ENCODE measurements at regions of chr19 and their contacts with region 1.

Region 1: GRCh38 chr19:8355631-8356402 is 8.1 kb upstream of the ANGPTL4 start:
- DNase-seq: no peak
- H3K4me3 ChIP-seq: no peak overlapping the region
- H3K4me3 Mint-ChIP-seq: peak overlapping the region in 1 of 8 donors; percentile 1
- H3K27ac ChIP-seq: no peak overlapping the region
- H3K27ac Mint-ChIP-seq: no peak overlapping the region
- H3K4me1 ChIP-seq: no peaks in the 10 kb centered on the region
- H3K4me1 Mint-ChIP-seq: peaks cover 0 to 5% (median 2%) of the 10 kb centered on the region in 4 donors
- H3K27me3 ChIP-seq: no peaks in the 10 kb centered on the region
- H3K27me3 Mint-ChIP-seq: peaks cover 6 to 11% of the 10 kb centered on the region in 2 donors

Region 2: GRCh38 chr19:8321060-8321985 is 34.5 kb before region 1 on chr19 and contains the starts of genes NDUFA7 and RPS28:
- CTCF ChIA-PET with region 1: interaction called, 10 read pairs
- POLR2A ChIA-PET with region 1: no interaction called
- intact Hi-C with region 1: no loop called
- DNase-seq: peak; percentile 96 to 97 (median 97)
- H3K4me3 ChIP-seq: peak within 1 kb of the TSS; percentile 88 to 96
- H3K4me3 Mint-ChIP-seq: peak within 1 kb of the TSS; percentile 94 to 99 (median 97)
- H3K27ac ChIP-seq: peak within 1 kb of the TSS; percentile 97
- H3K27ac Mint-ChIP-seq: peak within 1 kb of the TSS; percentile 97 to 99 (median 99)
- H3K4me1 ChIP-seq: peaks cover 42% of the 10 kb centered on the region
- H3K4me1 Mint-ChIP-seq: peaks cover 9 to 44% (median 33%) of the 10 kb centered on the region in 4 donors
- H3K27me3 ChIP-seq: no peaks in the 10 kb centered on the region
- H3K27me3 Mint-ChIP-seq: no peaks in the 10 kb centered on the region
- total RNA-seq, gene NDUFA7: 30.4 to 31.0 TPM
- total RNA-seq, gene RPS28: 2,963 to 3,045 TPM

Region 3: DNA sequence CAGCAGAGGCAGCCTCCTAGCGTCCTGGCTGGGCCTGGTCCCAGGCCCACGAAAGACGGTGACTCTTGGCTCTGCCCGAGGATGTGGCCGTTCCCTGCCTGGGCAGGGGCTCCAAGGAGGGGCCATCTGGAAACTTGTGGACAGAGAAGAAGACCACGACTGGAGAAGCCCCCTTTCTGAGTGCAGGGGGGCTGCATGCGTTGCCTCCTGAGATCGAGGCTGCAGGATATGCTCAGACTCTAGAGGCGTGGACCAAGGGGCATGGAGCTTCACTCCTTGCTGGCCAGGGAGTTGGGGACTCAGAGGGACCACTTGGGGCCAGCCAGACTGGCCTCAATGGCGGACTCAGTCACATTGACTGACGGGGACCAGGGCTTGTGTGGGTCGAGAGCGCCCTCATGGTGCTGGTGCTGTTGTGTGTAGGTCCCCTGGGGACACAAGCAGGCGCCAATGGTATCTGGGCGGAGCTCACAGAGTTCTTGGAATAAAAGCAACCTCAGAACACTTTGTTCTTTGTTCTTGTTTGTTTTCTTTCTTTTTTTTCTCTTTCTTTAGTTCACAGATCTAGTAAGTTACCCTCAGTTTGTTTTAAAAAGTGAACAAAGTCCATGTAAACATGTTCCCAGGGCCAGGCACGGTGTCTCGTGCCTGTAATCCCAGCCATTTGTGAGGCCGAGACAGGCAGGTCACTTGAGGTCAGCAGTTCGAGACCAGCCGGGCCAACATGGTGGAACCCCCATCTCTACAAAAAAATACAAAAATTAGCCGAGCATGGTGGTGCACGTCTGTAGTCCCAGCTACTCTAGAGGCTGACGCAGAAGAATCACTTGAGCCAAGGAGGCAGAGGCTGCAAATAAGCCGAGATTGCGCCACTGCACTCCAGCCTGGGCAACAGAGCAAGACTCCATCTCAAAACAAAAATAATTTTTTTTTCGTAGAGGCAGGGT is 18.3 kb after region 1 on chr19:
- CTCF ChIA-PET with region 1: interaction called, 15 read pairs
- POLR2A ChIA-PET with region 1: no interaction called
- intact Hi-C with region 1: no loop called
- DNase-seq: no peak
- H3K4me3 ChIP-seq: no peak overlapping the region
- H3K4me3 Mint-ChIP-seq: no peak overlapping the region
- H3K27ac ChIP-seq: no peak overlapping the region
- H3K27ac Mint-ChIP-seq: no peak overlapping the region
- H3K4me1 ChIP-seq: peaks cover 9% of the 10 kb centered on the region
- H3K4me1 Mint-ChIP-seq: peaks cover 2 to 17% (median 7%) of the 10 kb centered on the region in 4 donors
- H3K27me3 ChIP-seq: no peaks in the 10 kb centered on the region
- H3K27me3 Mint-ChIP-seq: no peaks in the 10 kb centered on the region

Region 4: GRCh38 chr19:8412783-8413628 is 57.2 kb after region 1 on chr19 and contains the start of gene MARCHF2:
- CTCF ChIA-PET with region 1: interaction called, 12 read pairs
- POLR2A ChIA-PET with region 1: interaction called, 3 read pairs
- intact Hi-C with region 1: no loop called
- DNase-seq: peak; percentile 93 to 96 (median 95)
- H3K4me3 ChIP-seq: peak within 1 kb of the TSS; percentile 36 to 60
- H3K4me3 Mint-ChIP-seq: peak within 1 kb of the TSS; percentile 54 to 83 (median 78)
- H3K27ac ChIP-seq: peak within 1 kb of the TSS; percentile 55
- H3K27ac Mint-ChIP-seq: peak within 1 kb of the TSS in 5 of 7 donors; percentile 37 to 82 (median 53)
- H3K4me1 ChIP-seq: peaks cover 19% of the 10 kb centered on the region
- H3K4me1 Mint-ChIP-seq: peaks cover 8 to 15% (median 10%) of the 10 kb centered on the region in 4 donors
- H3K27me3 ChIP-seq: no peaks in the 10 kb centered on the region
- H3K27me3 Mint-ChIP-seq: no peaks in the 10 kb centered on the region
- total RNA-seq, gene MARCHF2: 25.5 to 30.3 TPM

Region 5: GRCh38 chr19:8585894-8586750 is 230.3 kb after region 1 on chr19:
- CTCF ChIA-PET with region 1: interaction called, 42 read pairs
- POLR2A ChIA-PET with region 1: no interaction called
- intact Hi-C with region 1: loop called (anchors 2 kb)
- DNase-seq: peak; percentile 49 to 59 (median 53)
- H3K4me3 ChIP-seq: no peak overlapping the region
- H3K4me3 Mint-ChIP-seq: no peak overlapping the region
- H3K27ac ChIP-seq: no peak overlapping the region
- H3K27ac Mint-ChIP-seq: peak overlapping the region in 1 of 7 donors; percentile 42
- H3K4me1 ChIP-seq: peaks cover under 1% of the 10 kb centered on the region
- H3K4me1 Mint-ChIP-seq: peaks cover 0 to 5% (median 2%) of the 10 kb centered on the region in 4 donors
- H3K27me3 ChIP-seq: no peaks in the 10 kb centered on the region
- H3K27me3 Mint-ChIP-seq: no peaks in the 10 kb centered on the region

Measured in CD4-positive, alpha-beta memory T cell (primary cell).